ENCODE measurements at regions of chr10 and their contacts with region 1.

Region 1: DNA sequence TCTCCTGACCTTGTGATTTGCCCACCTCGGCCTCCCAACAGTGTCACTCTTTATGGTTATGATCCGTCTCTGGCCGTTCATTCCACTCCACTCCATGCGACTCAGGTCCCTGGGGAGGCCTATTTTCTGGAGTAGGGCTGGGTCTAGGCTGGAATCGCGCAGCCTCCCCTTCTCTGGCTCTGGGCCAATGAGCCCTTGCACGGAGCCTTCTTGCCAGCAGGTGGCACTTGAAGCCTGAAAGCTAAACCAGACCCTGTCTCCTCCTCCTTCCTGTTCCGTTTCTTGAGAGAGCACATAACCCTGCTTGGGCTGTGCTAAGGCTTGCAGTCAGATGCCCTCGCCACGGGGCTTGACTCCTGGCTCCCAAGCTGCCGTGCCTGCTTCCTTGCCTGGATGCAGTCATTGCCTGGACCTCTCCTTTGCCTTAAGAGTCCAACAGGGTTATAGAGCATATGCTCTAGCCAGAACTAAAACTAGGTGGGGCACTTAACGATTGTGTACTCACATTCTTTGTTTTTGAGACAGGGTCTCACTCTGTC is 9.6 kb upstream of the DNAJB12 start:
- DNase-seq: peak; percentile 97
- H3K4me3 ChIP-seq: no peak overlapping the region
- H3K27ac ChIP-seq: peak overlapping the region; percentile 15
- H3K4me1 ChIP-seq: no peaks in the 10 kb centered on the region
- H3K27me3 ChIP-seq: no peaks in the 10 kb centered on the region
- CTCF ChIP-seq: peak; percentile 95

Region 2: DNA sequence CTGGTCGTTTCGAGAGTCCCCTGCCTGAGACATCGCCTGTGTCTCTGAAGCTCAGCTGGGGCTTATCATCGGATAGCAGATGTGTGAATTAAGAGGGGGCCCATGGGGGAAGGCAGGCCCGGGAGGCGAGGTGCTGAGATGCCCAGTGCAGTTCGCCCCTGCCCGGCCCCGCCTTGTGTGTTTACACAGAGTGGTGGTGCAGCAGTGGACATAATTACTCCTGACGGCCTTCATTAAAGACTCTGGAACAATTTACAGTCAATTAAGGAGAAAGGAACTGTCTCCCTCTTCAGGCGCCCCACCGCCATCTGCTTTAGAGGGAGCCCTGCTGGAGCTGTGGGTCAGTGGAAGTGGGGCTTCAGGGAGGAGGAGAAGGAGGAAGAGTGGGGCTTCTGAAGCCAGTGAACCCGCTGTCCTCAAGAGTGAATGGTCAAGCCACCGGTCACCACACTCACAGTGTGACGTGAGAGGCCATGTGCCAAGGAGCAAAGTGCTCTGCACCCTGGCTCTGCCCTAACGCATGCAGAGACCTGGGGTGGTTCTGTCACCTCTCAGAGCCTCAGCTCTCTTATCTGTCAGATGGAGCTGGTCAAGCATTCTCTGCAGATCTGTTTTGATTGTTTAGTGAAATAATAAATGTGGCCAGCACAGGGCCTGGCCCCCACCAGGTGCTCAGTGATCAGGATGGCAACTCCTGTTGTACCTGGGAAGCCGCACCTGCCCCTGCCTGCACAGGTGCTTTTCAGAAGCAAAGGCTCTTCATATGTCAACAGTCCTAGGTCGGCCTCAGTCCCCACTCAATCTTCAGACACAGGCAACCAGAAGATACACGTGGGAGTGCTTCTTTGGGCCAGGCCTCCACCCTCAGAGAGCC is 902.0 kb before region 1 on chr10:
- CTCF ChIA-PET with region 1: no interaction called
- POLR2A ChIA-PET with region 1: no interaction called
- intact Hi-C with region 1: no loop called
- DNase-seq: no peak
- H3K4me3 ChIP-seq: no peak overlapping the region
- H3K27ac ChIP-seq: no peak overlapping the region
- H3K4me1 ChIP-seq: no peaks in the 10 kb centered on the region
- H3K27me3 ChIP-seq: no peaks in the 10 kb centered on the region
- CTCF ChIP-seq: no peak

Region 3: DNA sequence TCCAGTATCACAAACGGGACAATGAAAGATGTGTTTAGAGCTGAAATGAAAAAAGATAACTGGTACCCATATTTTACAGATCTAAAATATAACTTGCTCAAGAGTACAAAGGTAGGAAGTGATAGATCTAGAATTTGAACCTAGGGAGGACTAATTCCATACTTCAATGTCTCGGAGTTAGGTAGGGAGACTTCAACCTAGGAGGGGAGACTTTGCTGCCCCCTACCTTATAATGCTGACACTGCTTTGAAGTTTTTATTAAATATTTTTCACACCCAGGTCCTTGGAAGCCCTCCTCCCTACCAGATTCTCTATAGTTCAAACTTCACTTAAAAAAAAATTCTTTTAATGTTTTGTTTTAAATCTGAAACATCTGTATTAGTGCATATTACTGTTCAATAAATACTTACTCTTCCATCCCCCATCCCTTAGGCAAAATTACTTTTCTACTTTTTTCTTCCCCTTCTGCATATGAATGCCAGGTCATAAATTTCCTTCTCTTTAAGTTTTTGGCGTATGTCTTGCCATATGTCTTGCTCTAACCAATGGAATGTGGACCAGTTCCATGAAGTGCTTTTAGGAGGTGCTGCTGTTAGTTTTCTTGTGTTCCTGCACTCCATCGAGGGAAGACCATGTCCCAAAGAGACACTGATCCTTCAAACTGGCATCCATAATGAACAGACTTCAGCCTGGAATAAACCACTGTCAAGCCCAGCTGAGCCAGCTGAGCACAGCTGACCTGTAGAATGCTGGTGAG is 203.8 kb after region 1 on chr10:
- CTCF ChIA-PET with region 1: interaction called, 3 read pairs
- POLR2A ChIA-PET with region 1: no interaction called
- intact Hi-C with region 1: loop called (anchors 5 kb)
- DNase-seq: peak; percentile 43
- H3K4me3 ChIP-seq: no peak overlapping the region
- H3K27ac ChIP-seq: no peak overlapping the region
- H3K4me1 ChIP-seq: no peaks in the 10 kb centered on the region
- H3K27me3 ChIP-seq: no peaks in the 10 kb centered on the region
- CTCF ChIP-seq: peak; percentile 67

Region 4: GRCh38 chr10:72692057-72692910 is 328.0 kb after region 1 on chr10 and contains the start of gene MCU:
- CTCF ChIA-PET with region 1: no interaction called
- POLR2A ChIA-PET with region 1: no interaction called
- intact Hi-C with region 1: loop called (anchors 5 kb)
- DNase-seq: peak; percentile 96
- H3K4me3 ChIP-seq: peak within 1 kb of the TSS; percentile 79
- H3K27ac ChIP-seq: peak within 1 kb of the TSS; percentile 69
- H3K4me1 ChIP-seq: peaks cover 29% of the 10 kb centered on the region
- H3K27me3 ChIP-seq: no peaks in the 10 kb centered on the region
- CTCF ChIP-seq: no peak
- total RNA-seq, gene MCU: 18.7 and 20.1 TPM in 2 replicates

Region 5: DNA sequence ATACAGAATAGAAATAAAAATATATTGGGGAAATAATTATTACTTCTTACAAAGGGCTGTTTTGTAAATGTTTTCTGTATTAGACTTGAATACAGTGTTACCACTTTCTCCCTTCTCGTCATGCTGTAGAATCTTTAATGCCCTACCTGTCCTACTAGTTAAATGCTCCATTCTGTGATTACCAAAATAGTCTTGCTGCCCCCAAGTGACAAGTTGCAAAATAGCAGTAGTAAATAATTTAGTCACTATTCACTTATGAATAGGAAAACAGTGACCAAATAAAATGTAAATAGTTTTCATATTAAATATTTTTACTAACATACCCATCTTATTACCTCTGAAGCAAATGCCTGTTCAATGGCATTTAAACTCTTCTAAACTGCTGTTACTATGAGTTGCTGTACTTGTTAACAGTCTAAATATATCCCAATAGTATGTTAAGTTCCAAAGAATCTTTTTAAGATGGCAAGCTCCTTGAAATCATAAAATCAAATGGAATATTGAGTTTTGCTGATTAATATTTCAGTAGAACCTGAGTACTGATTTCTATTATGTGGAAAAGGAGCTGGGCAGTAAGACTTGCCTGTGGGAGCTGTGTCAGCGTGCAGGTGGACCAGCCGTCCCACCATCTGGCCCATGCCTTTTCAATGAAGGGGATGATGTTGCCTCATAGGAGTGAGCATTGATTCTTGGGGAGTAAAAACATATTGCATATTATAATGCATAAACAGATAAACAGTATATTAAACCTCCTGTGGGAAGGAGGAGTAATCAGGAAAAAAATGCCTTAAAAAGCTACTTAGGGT is 511.1 kb after region 1 on chr10:
- CTCF ChIA-PET with region 1: no interaction called
- POLR2A ChIA-PET with region 1: no interaction called
- intact Hi-C with region 1: loop called (anchors 5 kb)
- DNase-seq: peak; percentile 43
- H3K4me3 ChIP-seq: no peak overlapping the region
- H3K27ac ChIP-seq: no peak overlapping the region
- H3K4me1 ChIP-seq: no peaks in the 10 kb centered on the region
- H3K27me3 ChIP-seq: no peaks in the 10 kb centered on the region
- CTCF ChIP-seq: peak; percentile 71

Region 6: DNA sequence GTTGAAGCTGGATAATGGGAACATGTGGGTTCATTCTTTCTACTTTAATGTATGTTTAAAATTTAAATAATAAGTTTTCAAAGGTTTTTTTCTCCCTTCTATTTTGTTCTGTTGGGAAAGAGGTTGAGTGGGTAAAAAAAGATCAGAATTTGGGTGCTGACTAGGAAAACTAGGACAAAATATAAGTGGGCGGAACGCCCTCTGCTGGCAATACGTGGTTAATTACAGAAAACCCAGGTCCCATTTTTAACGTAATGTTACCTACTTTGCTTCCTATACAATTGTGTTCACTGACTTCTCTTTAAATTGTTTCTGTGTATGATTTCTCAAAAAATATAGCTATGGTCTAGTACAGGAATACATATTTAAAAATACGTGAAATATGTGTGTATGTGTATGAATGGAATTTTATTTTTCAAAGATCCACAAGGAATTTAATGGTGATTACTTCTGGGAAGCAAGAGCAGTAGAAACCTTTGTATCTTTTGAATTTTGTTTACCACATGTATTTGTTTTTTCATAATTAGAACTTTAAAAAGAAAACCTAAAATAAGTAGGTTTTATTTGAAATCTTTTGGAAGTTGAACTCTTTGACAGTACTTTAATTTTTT is 794.8 kb after region 1 on chr10:
- CTCF ChIA-PET with region 1: no interaction called
- POLR2A ChIA-PET with region 1: no interaction called
- intact Hi-C with region 1: loop called (anchors 5 kb)
- DNase-seq: peak; percentile 68
- H3K4me3 ChIP-seq: no peak overlapping the region
- H3K27ac ChIP-seq: no peak overlapping the region
- H3K4me1 ChIP-seq: no peaks in the 10 kb centered on the region
- H3K27me3 ChIP-seq: no peaks in the 10 kb centered on the region
- CTCF ChIP-seq: peak; percentile 83

Measured in A673 (cell line).